GM23248 (cell line): ENCODE measurements at regions of chr1 and their contacts with region 1.

Region 1: DNA sequence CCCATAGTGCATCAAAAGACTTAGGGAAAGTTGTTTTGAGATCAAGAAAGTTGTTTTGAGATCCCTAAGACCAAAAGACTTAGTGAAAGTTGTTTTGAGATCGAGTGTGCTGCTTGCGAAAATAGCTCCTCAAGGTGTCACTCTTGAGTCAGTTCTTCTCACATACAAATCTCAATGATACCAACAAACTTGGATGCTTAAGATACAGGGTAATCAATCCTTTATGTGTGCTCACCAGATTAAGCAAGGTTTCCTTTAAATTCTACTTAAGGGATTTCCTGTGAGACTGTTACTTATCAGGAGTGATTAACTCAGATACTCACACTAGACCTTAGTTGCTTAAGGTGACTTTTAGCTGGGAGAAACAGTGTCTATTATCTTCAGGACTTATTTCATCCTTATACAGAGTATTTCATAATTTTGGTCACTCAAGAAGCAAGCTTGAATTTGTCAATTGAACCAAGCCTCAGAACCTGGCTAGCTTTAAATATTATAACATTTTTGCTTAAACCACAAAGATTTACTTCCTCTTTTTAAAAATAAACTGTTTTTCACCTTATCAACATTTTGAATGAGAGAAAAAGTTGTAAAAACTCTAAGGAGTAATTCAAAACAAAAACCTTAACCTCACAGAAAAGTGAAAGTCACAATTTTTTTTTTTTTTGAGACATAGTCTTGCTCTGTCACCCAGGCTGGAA is 8.0 kb upstream of the RLF start:
- DNase-seq: peak; percentile 74
- H3K4me3 ChIP-seq: no peak overlapping the region
- H3K27ac ChIP-seq: no peak overlapping the region
- H3K4me1 ChIP-seq: no peaks in the 10 kb centered on the region
- H3K27me3 ChIP-seq: peaks cover 6% of the 10 kb centered on the region; the same call in 1 of the 2 replicates

Region 2: GRCh38 chr1:39799770-39800470 is 353.3 kb before region 1 on chr1:
- in situ Hi-C with region 1: no loop called
- DNase-seq: peak; percentile 92
- H3K4me3 ChIP-seq: no peak overlapping the region
- H3K27ac ChIP-seq: peak overlapping the region; percentile 25
- H3K4me1 ChIP-seq: peaks cover 6% of the 10 kb centered on the region
- H3K27me3 ChIP-seq: no peaks in the 10 kb centered on the region

Region 3: DNA sequence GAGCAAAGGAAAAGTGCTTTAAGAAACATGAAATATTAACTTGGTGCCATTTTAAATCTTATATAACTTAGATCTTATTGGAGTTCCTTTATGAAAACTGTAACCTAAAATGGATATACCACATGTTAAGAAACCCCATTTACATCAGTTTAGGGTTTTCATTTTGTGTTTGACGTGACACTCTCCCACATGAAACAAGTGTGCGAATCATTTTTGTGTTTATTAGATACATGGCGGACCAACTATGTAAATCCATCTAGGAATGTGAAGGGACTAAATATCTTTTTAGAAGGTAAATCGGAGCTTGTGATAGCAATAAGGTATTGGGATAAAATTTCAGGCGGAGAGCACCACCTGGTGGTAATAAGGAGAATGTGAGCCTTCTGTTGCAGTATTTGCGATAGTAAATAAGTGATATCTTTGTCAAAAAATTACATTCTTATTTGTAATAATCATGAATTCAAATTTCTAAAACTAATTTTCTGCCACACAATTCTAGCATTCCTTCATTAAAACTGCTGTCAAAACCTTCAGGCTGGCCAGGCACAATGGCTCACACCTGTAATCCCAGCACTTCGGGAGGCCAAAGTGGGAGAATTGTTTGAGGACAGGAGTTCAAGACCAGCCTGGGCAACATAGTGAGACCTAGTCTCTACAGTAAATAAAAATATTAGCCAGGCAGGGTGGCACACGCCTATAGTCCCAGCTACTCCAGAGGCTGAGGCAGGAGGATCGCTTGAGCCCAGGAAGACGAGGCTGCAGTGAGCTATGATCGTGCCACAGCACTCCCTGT is 251.6 kb after region 1 on chr1:
- in situ Hi-C with region 1: loop called (anchors 10 kb)
- DNase-seq: peak; percentile 67
- H3K4me3 ChIP-seq: peak overlapping the region; percentile 36; the same call in 1 of the 2 replicates
- H3K27ac ChIP-seq: no peak overlapping the region
- H3K4me1 ChIP-seq: no peaks in the 10 kb centered on the region
- H3K27me3 ChIP-seq: no peaks in the 10 kb centered on the region

Region 4: DNA sequence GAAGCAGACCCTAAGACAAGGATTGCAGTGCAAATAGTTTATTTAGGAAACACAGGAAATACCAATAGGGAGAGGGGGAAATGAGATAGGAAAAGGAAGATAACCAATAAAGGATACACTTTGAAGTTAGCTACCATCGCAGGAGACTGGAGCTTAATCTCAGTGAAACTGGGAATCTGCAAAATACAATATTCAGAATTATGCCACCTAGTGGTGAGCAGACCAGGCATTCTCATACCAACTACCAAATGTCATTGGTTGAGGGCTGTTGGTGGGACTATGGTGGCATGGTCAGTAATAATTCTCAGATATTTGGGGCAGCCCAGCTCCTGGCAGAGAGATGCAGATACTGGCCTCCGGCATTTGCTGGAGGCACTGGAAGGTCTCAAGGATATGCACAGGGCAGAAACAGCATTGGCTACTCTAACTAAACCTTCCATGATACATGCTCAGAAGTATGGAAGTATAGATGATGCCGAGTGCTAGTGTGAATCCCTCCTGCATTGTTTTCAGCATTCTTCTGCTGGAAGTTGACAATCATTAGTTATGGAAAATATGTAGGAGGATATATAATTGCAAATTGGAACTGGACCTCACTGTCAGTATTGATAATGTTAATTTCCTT is 285.3 kb after region 1 on chr1:
- in situ Hi-C with region 1: no loop called
- DNase-seq: peak; percentile 52
- H3K4me3 ChIP-seq: no peak overlapping the region
- H3K27ac ChIP-seq: no peak overlapping the region
- H3K4me1 ChIP-seq: peaks cover 12% of the 10 kb centered on the region; the same call in 1 of the 2 replicates
- H3K27me3 ChIP-seq: no peaks in the 10 kb centered on the region